ENCODE measurements at regions of chr6 and their contacts with region 1.

Region 1: GRCh38 chr6:70657706-70658105 is 10.0 kb upstream of the SMAP1 start:
- DNase-seq: no peak
- ATAC-seq: no peak
- H3K4me3 ChIP-seq: no peak overlapping the region
- H3K27ac ChIP-seq: no peak overlapping the region
- H3K4me1 ChIP-seq: no peaks in the 10 kb centered on the region
- H3K27me3 ChIP-seq: no peaks in the 10 kb centered on the region
- CTCF ChIP-seq: no peak
- POLR2A ChIP-seq: no peak

Region 2: GRCh38 chr6:70586114-70586513 is 71.6 kb before region 1 on chr6:
- intact Hi-C with region 1: loop called in 1 of 10 experiments (anchors 5 kb)
- DNase-seq: no peak
- ATAC-seq: no peak
- H3K4me3 ChIP-seq: no peak overlapping the region
- H3K27ac ChIP-seq: no peak overlapping the region
- H3K4me1 ChIP-seq: no peaks in the 10 kb centered on the region
- H3K27me3 ChIP-seq: no peaks in the 10 kb centered on the region
- CTCF ChIP-seq: no peak
- POLR2A ChIP-seq: no peak